ENCODE measurements at regions of chr6 and their contacts with region 1.

Region 1: DNA sequence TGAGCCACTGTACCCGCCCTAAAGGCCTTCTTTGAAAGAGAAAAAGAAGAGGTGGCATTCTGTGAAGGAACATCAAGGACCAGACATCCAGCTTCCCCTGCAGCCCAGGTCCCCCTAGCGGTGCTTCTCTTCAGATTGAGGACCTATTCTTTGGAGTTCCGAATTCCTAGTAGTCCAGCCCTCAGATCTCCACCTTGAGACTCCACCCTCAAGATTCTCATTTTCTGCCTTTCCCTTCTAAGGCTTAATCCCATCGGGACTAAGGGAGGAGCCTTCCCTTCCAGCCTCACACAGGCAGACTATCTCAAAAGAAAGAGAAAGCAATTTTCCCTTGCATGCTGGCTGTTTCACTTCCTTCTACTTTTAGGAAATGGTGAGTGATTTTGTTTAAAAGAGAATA is 32.5 kb downstream of the MUC22 start:
- DNase-seq: peak; percentile 54 to 75 (median 62)
- ATAC-seq: peak; percentile 86
- H3K4me3 ChIP-seq: no peak overlapping the region
- H3K27ac ChIP-seq: no peak overlapping the region
- H3K4me1 ChIP-seq: no peaks in the 10 kb centered on the region
- H3K27me3 ChIP-seq: peaks cover 34 to 61% of the 10 kb centered on the region in 2 experiments
- CTCF ChIP-seq: peak; percentile 71 to 86 (median 74)
- EP300 ChIP-seq: no peak
- POLR2A ChIP-seq: no peak
- RAD21 ChIP-seq: peak; percentile 60 to 77

Region 2: DNA sequence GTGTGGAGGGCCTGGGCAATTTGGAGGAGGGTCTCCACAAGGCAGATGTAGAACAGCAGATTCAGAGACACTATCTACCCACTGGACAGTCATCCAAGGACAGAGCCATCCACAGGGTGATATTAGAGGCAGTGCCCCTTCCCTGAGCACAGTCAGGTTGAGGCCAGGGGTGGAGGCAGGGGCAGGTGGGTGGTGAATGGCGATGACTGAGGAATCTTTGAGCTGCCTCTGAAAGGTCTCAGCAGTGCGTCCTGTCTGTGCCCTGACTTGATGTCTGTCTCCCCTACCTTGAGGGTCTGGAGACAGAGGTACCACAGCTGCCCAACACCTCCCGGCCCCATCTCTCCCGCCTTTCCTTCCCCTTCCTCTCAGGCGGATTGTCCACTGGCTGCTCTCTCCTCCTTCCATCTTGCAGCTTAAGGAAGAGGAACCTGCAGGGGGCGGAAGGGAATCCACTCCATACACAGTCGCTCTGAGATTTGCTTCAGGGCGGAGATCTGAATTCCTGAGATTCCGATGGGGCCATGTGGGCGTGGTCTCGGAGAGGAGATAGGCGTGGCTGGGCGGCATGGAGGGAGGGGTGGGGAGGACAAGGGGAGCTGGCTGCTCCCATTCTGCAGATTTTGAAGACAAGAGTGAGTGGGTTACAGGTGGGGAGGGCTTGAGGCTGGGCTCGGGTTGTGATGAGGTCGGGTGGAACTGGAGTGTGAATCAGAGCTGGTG is 100.3 kb before region 1 on chr6:
- CTCF ChIA-PET with region 1: interaction called, 3 read pairs
- POLR2A ChIA-PET with region 1: no interaction called
- in situ Hi-C with region 1: no loop called
- intact Hi-C with region 1: loop called (anchors 5 kb)
- DNase-seq: peak; percentile 83 to 91 (median 84)
- ATAC-seq: peak; percentile 94
- H3K4me3 ChIP-seq: no peak overlapping the region
- H3K27ac ChIP-seq: no peak overlapping the region
- H3K4me1 ChIP-seq: peaks cover 8 to 11% of the 10 kb centered on the region in 2 experiments
- H3K27me3 ChIP-seq: peaks cover 37 to 80% of the 10 kb centered on the region in 2 experiments
- CTCF ChIP-seq: peak; percentile 57 to 63 (median 61)
- EP300 ChIP-seq: 0 out of 2 replicates have a peak, but pooled peaks have one; percentile 6
- POLR2A ChIP-seq: no peak
- RAD21 ChIP-seq: peak; percentile 25 to 64; a peak in 3 of 4 replicates